Lower lobe of right lung (tissue), 2 donors: ENCODE measurements at regions of chr17 and their contacts with region 1.

Region 1: DNA sequence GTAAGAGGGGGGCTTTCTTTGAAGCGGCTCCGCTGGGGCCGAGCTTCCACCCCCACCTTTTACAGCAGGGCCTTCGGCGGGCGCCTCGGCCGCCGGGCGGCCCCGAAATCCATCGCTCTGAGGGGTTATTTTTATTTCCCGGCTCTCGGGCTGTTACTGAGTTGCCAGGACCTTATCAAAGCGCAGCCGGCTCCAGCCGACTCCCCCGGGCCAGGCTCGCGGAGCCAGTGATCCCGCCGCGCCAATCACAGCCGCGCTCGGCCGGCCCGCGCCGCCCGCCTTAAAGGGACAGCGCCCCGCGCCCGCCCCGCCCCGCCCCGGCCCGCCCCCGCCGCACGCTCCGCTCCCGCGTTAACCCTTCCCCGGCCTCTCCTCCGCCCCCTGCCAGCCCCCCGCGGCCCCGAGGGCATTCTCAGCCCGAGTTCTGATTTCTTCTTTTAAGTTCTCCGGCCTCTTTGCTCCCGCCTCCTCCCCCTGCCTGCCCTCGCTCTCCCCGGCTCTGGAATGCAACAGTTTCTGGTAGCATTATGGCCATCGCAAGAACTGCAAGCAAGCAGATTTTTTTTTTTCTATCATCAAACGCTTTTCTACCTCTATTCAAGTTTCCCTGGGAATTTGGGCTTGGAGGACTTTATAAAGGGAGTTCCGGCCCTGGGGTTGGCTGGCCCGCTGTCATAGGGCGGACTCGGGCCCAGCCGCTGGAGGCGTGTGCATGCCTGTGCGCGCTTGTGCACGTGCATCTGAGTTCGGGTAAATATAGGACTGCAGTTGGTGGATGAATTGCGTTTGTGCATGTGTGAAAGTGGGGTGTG is at the start of gene AXIN2:
- DNase-seq: peak; percentile 94
- ATAC-seq: peak; percentile 83 to 89
- H3K4me3 ChIP-seq: no peak within 1 kb of the TSS
- H3K27ac ChIP-seq: no peak within 1 kb of the TSS
- H3K4me1 ChIP-seq: peaks cover 14% of the 10 kb centered on the region
- H3K27me3 ChIP-seq: peaks cover 3% of the 10 kb centered on the region
- CTCF ChIP-seq: peak; percentile 17
- total RNA-seq, gene AXIN2: 53.4 TPM

Region 2: DNA sequence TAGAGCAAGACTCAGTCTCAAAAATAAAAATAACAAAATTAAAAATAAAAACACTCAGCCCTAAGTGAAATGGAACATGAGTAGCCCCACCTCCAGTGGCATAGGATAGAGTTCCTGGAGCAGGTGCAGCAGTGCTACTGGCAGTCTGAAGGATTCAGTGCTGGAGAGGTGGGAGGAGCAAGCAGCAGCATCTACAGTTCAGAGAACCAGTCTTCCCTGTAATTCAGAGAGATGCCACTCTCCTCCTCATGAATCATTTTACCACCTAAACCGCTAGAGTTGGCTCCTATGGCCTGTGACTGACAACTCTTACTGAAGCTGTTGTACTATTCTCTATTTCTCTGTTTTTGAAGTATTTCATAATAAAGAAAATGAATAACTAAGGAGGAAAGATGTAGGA is 843.5 kb before region 1 on chr17:
- intact Hi-C with region 1: no loop called
- DNase-seq: no peak
- ATAC-seq: peak in 1 of 2 donors; percentile 49
- H3K4me3 ChIP-seq: no peak overlapping the region
- H3K27ac ChIP-seq: no peak overlapping the region
- H3K4me1 ChIP-seq: peaks cover 19% of the 10 kb centered on the region
- H3K27me3 ChIP-seq: no peaks in the 10 kb centered on the region
- CTCF ChIP-seq: no peak

Region 3: GRCh38 chr17:65925606-65926307 is 364.2 kb after region 1 on chr17:
- intact Hi-C with region 1: no loop called
- DNase-seq: no peak
- ATAC-seq: no peak
- H3K4me3 ChIP-seq: no peak overlapping the region
- H3K27ac ChIP-seq: no peak overlapping the region
- H3K4me1 ChIP-seq: no peaks in the 10 kb centered on the region
- H3K27me3 ChIP-seq: no peaks in the 10 kb centered on the region
- CTCF ChIP-seq: no peak

Region 4: GRCh38 chr17:66165513-66166123 is 604.0 kb after region 1 on chr17:
- intact Hi-C with region 1: loop called (anchors 5 kb)
- DNase-seq: no peak
- ATAC-seq: peak in 1 of 2 donors; percentile 54
- H3K4me3 ChIP-seq: no peak overlapping the region
- H3K27ac ChIP-seq: no peak overlapping the region
- H3K4me1 ChIP-seq: no peaks in the 10 kb centered on the region
- H3K27me3 ChIP-seq: no peaks in the 10 kb centered on the region
- CTCF ChIP-seq: peak; percentile 66